Endothelial cell of umbilical vein (primary cell): ENCODE measurements at regions of chr14 and their contacts with region 1.

Region 1: DNA sequence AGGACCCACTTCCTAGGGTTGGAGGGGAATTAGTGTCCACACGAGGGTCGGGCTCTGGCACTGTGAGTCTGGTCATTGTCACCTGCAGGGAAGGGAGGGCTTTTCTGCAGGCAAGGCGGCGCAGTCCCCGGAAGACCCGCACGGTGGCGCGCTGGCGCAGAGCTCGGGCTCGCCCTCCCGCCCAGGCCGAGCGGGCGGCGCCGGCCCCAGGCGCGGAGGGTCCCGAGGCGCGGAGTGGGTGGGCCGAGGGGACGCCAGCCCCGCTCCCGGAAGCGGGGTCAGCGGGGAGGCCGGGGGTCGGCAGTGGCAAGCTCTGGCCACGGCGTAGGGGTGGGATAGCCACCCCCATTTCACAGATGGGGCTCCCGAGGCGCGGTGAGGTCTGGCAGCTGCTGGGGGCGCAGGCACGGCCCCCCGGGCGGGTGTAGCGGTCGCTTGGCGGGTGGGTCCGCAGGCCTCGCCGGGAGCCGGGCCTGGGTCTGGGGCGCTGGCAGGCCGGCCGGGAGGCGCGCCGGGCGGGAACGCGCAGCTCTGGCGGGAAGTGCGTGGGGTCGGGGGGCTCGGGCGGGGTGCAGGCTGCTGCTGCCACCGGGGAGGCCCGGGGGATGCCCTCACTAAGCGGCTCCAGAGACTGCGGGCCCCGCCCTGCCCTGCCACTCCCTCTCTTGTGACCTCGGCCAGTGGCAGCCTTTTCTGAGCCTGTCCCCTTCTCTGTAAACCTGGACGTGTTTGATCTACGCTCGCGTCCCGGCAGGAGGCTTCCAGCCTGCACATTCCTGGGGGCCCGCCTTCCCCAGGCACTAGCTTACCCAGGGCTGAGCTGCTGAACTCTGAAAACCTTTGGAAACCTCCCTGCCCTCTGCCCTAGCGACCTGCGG is 46.1 kb downstream of the CYP46A1 start:
- DNase-seq: peak; percentile 58
- H3K4me3 ChIP-seq: peak overlapping the region; percentile 15 to 58 (median 38)
- H3K27ac ChIP-seq: peak overlapping the region; percentile 17
- H3K4me1 ChIP-seq: peaks cover 22% of the 10 kb centered on the region
- H3K27me3 ChIP-seq: no peaks in the 10 kb centered on the region
- CTCF ChIP-seq: peak; percentile 86 to 94
- POLR2A ChIP-seq: no peak

Region 2: DNA sequence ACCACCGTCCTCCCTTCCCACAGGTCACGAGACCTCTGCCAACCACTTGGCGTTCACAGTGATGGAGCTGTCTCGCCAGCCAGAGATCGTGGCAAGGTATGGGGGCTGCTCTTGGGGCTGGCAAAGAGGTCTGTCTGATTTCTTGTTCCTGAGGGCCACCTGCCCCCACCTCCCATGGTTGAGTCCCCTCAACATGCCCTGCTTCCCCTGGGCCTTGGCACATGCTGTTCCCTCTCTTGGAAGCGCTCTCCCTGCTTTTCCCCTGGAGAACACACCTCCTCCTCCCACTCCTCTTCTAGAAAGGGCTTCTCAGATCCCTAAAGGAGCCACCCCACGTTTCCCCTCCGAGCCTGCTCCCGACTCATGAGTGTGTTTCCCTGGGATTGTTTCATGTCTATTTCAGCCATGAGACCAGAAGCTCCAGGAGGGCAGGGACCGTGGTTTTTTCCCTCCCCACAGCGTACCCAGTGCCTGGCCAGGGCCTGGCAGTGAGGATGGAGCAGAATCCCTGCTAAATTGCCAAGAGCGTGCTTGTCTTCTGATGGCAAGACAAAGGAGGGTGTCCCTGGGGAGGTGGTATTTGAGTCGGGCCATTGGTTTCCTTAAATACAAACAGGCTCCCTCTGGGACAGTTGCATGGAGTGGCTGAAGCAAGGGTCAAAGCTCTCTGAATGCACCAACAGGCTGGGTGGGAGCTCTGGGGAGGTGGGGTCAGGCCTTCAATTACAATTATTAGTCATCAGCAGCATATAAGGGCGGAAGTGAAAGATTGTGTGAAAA is 12.0 kb before region 1 on chr14:
- CTCF ChIA-PET with region 1: interaction called, 10 read pairs
- POLR2A ChIA-PET with region 1: no interaction called
- dilution Hi-C with region 1: no loop called
- intact Hi-C with region 1: no loop called
- DNase-seq: no peak
- H3K4me3 ChIP-seq: no peak overlapping the region
- H3K27ac ChIP-seq: no peak overlapping the region
- H3K4me1 ChIP-seq: no peaks in the 10 kb centered on the region
- H3K27me3 ChIP-seq: peaks cover 0 to 2% of the 10 kb centered on the region in 2 experiments
- CTCF ChIP-seq: no peak
- POLR2A ChIP-seq: no peak

Region 3: DNA sequence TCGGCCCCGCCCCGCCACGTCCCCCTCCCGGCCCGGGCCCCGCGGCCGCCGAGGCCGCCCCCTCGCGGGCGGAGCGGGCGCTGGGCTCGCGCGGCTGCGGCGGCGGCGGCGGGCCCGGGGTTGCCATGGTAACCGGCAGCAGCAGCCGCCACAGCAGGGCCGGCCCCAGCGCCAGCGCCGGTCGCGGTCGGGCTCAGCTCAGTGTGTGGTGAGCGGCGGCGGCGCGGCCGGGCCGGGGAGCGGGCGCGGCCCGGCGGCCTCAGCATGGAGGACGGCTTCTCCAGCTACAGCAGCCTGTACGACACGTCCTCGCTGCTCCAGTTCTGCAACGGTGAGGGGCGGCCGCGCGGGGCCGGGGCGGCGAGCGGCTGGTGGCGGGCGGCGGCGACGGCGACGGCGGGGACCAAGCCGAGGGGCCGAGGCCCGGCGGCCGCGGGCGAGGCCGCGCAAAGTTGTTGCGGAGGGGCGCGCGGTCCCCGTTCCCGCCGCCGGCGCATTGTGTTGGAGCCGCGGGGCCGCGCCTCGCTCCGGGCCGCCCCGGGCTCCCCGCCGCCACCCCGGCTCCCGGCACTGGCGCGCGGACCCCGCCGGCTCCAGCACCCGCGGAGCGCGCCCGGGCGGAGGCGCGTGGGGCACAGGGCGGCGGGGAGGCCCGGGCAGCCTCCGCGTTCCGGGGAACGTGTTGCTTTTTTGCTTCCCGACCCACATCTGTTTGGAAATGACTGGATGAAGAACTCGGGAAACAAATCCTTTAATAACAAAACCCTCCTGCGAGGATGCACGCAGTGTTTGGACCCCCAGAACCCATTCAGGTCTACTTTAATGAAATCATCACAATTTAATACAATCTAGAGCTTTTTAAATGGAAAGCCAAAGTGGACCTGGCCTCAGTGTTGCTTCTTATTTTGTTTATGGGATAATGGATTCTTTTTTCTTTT is 63.3 kb after region 1 on chr14 and contains the start of gene EML1:
- CTCF ChIA-PET with region 1: interaction called, 35 read pairs
- POLR2A ChIA-PET with region 1: no interaction called
- dilution Hi-C with region 1: no loop called
- intact Hi-C with region 1: loop called (anchors 1 kb)
- DNase-seq: peak; percentile 64
- H3K4me3 ChIP-seq: peak within 1 kb of the TSS; percentile 35 to 91 (median 65)
- H3K27ac ChIP-seq: peak within 1 kb of the TSS; percentile 15
- H3K4me1 ChIP-seq: peaks cover 20% of the 10 kb centered on the region
- H3K27me3 ChIP-seq: no peaks in the 10 kb centered on the region
- CTCF ChIP-seq: no peak
- POLR2A ChIP-seq: peak; percentile 56
- total RNA-seq, gene EML1: 33.0 and 47.8 TPM in 2 replicates

Region 4: DNA sequence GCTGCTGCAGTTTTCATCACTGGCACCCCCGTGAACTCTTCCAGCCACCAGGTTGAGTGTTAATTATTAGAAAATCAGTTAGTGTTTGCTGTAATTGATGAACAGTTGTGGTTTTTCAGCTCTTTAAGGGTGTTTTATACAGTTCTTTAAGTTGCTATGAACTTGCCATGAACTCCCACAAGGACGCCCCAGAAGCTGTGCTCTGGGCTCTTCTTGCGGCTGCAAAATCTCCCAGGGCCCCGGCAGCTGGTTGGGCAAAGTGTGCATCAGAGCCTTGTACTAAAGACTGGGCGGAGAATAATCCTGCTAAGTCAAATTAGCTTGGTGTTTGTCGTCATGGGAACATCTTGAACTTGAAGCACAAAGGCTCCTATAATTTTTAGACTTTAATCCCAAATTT is 145.2 kb after region 1 on chr14:
- CTCF ChIA-PET with region 1: interaction called, 86 read pairs
- POLR2A ChIA-PET with region 1: no interaction called
- dilution Hi-C with region 1: no loop called
- intact Hi-C with region 1: no loop called
- DNase-seq: no peak
- H3K4me3 ChIP-seq: no peak overlapping the region
- H3K27ac ChIP-seq: no peak overlapping the region
- H3K4me1 ChIP-seq: no peaks in the 10 kb centered on the region
- H3K27me3 ChIP-seq: no peaks in the 10 kb centered on the region
- CTCF ChIP-seq: no peak
- POLR2A ChIP-seq: no peak

Region 5: DNA sequence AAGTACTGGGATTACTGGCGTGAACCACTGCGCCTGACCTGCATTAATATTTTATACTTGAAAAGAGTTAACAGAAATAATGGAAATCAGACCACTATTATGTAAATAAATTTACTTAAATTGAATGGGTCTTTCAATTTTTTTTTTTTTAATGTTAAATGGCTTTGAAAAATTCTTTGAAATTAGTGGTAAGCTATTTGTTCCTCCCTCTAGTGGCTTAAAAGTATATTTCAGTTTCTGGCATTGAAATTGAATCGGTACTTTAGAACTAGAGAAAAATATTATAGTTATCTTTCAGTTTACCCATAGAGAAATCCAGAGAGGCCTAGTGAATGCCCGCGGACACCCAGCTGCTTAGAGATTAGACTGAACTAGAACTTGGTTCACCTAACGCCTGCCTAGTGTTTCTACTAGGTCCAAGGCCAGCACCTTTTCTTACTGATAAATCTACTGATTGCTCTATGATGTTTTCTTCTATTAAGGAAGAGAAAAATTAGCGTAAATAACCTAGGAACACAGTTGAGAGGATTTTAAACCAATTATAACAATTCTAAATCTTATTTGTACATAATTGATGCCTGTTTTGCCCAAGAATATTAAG is 169.4 kb after region 1 on chr14:
- CTCF ChIA-PET with region 1: interaction called, 21 read pairs
- POLR2A ChIA-PET with region 1: no interaction called
- dilution Hi-C with region 1: no loop called
- intact Hi-C with region 1: no loop called
- DNase-seq: peak; percentile 45
- H3K4me3 ChIP-seq: no peak overlapping the region
- H3K27ac ChIP-seq: no peak overlapping the region
- H3K4me1 ChIP-seq: no peaks in the 10 kb centered on the region
- H3K27me3 ChIP-seq: no peaks in the 10 kb centered on the region
- CTCF ChIP-seq: peak; percentile 21 to 29
- POLR2A ChIP-seq: no peak